GM12878 (cell line): ENCODE measurements at regions of chr20 and their contacts with region 1.

Region 1: GRCh38 chr20:34825530-34826362 is at the start of gene NCOA6:
- DNase-seq: no peak
- ATAC-seq: peak; percentile 59
- H3K4me3 ChIP-seq: peak within 1 kb of the TSS; percentile 65
- H3K27ac ChIP-seq: peak within 1 kb of the TSS; percentile 86
- H3K4me1 ChIP-seq: no peaks in the 10 kb centered on the region; the same call in 1 of the 2 replicates
- H3K27me3 ChIP-seq: no peaks in the 10 kb centered on the region
- CTCF ChIP-seq: no peak
- EP300 ChIP-seq: no peak
- POLR2A ChIP-seq: peak; percentile 70
- RAD21 ChIP-seq: no peak
- polyA plus RNA-seq, gene NCOA6: 8.1 to 14.3 TPM

Region 2: GRCh38 chr20:35269055-35269781 is 443.5 kb after region 1 on chr20:
- CTCF ChIA-PET with region 1: no interaction called
- POLR2A ChIA-PET with region 1: no interaction called
- RAD21 ChIA-PET with region 1: no interaction called
- SMC1A ChIA-PET with region 1: no interaction called
- in situ Hi-C with region 1: loop called (anchors 25 kb)
- intact Hi-C with region 1: no loop called
- DNase-seq: no peak
- ATAC-seq: peak; percentile 96
- H3K4me3 ChIP-seq: no peak overlapping the region
- H3K27ac ChIP-seq: no peak overlapping the region
- H3K4me1 ChIP-seq: no peaks in the 10 kb centered on the region
- H3K27me3 ChIP-seq: no peaks in the 10 kb centered on the region
- CTCF ChIP-seq: peak; percentile 78 to 83 (median 82)
- EP300 ChIP-seq: no peak
- POLR2A ChIP-seq: no peak
- RAD21 ChIP-seq: peak; percentile 76

Region 3: DNA sequence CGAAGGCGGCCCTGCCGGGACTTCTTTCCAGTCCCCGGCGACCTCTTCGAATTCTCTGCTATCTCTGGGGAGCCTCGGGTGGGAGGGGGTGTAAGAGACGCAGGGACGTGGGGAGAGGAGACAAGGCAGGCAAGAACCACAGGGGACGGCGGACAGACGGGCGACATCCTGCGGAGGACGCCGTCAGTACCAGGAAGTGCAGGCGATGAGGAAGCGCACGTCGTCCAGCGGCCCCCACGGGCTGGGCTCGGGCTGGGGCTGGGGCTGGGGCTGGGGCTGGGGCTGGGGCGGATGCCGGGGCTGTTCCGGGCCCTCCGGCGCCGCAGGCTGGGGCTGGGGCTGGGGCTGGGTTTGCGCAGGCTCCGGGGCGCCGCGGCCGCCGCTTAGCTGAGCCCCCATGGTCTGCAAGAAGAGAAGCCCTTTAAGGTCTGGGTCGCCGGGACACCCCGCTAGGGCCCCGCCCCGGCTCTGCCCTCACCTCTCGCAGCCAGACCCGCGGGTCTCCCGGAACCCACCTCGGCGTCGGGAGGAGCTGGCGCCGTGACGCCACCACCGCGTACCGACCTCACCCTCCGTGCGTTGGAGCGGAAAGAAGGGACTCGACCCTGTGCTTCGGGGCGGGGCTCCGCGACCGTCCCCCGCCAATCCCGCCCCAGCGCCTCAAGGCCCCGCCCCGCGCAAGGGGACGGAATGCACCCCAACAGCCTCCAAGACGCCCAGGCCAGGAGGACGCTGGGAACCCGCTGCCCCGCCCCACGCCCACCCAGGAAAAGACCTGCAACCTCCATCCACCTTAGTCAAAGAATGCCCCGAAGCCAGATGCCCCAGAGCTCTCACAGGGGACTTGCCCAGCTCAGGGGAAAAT is 452.0 kb after region 1 on chr20 and contains the start of gene MMP24OS:
- CTCF ChIA-PET with region 1: no interaction called
- POLR2A ChIA-PET with region 1: no interaction called
- RAD21 ChIA-PET with region 1: no interaction called
- SMC1A ChIA-PET with region 1: no interaction called
- in situ Hi-C with region 1: loop called (anchors 25 kb)
- intact Hi-C with region 1: loop called (anchors 5 kb)
- DNase-seq: peak; percentile 64
- ATAC-seq: peak; percentile 95
- H3K4me3 ChIP-seq: peak within 1 kb of the TSS; percentile 93
- H3K27ac ChIP-seq: peak within 1 kb of the TSS; percentile 70
- H3K4me1 ChIP-seq: peaks cover 9% of the 10 kb centered on the region
- H3K27me3 ChIP-seq: no peaks in the 10 kb centered on the region
- CTCF ChIP-seq: peak; percentile 31 to 65 (median 50); a peak in 4 of 6 replicates
- EP300 ChIP-seq: no peak
- POLR2A ChIP-seq: peak; percentile 96
- RAD21 ChIP-seq: no peak
- polyA plus RNA-seq, gene MMP24OS: 2.0 to 3.6 TPM